ENCODE measurements at regions of chr1 and their contacts with region 1.

Region 1: DNA sequence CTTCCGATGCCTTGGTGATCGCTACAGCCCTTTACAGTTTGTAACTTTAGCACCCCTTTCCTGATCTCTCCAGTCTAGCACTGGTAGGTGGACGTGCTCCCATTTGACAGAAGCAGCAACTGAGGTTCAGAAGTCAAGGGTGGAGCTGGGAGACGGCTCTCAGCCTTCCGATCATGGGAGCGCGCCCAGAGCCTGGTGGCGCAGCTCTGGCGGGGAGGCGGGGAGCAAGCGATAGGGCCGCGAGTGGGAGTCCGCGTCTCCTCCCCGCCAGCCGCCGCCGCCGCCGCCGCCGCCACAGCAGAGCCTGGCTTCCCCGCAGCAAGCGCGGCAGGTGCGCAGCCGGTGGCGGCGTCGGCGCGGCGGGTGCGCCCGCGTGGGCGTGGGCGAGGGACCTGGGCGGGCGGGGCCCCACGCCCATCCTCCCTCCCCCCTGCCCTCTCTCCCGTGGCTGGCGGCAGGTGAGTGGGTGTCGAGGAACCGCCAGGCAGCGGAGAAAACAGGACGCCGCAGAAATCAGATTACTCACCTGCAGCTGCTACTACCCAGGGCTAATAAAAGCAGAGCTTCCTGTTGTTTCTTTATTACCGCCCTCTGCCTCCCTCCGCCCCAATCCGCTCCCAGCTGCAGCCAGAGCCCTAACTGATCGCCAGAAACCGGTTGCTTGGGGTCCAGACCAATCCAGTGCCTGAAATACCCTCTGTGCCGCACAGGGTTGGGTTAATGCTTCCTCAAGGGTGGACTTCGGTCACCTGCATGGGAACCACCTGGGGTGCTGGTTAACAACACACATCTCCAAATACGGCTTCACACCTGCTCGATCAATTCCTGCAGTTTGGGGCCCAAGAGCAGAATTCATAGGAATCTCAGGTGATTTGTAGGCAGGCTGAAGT is 60.2 kb upstream of the ID3 start:
- DNase-seq: peak; percentile 91
- ATAC-seq: peak; percentile 72
- H3K4me3 Mint-ChIP-seq: peak overlapping the region; percentile 68
- H3K27ac Mint-ChIP-seq: peak overlapping the region; percentile 82
- H3K4me1 Mint-ChIP-seq: peaks cover 81% of the 10 kb centered on the region
- H3K27me3 Mint-ChIP-seq: no peaks in the 10 kb centered on the region
- CTCF ChIP-seq: no peak

Region 2: GRCh38 chr1:23577056-23578004 is 42.2 kb before region 1 on chr1:
- CTCF ChIA-PET with region 1: interaction called, 3 read pairs
- POLR2A ChIA-PET with region 1: interaction called, 13 read pairs
- intact Hi-C with region 1: loop called (anchors 5 kb)
- DNase-seq: peak; percentile 81
- ATAC-seq: peak; percentile 93
- H3K4me3 Mint-ChIP-seq: peak overlapping the region; percentile 40
- H3K27ac Mint-ChIP-seq: peak overlapping the region; percentile 85
- H3K4me1 Mint-ChIP-seq: peaks cover 59% of the 10 kb centered on the region
- H3K27me3 Mint-ChIP-seq: no peaks in the 10 kb centered on the region
- CTCF ChIP-seq: no peak

Region 3: DNA sequence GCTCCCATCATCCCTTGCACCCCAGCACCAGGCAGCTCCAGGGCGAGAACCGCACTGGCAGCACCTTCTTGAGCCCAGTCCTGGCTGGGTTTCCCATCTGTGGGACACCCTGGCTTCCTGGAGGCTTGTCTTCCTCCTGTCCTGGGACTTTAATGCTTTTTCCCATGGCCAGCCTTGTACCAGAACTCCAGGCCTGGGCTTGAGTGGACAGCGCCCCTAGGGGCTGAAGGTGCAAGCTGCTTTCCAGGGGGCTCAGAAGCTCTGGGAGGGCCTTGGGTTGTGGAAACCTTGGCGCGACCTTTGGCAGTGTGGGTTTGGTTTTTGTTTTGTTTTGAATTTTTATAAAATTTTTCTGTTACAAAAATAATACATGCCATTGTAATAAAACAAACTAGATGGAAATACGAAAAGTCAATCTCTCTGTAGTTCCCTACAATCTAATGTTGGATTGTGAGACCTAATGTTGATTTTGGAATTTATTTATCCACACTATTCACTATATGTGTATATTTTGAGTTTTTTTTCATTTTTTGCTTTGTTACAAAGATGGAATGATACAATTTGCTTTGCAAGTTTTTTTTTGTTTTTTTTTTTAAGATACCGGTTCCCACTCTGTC is 38.2 kb after region 1 on chr1:
- CTCF ChIA-PET with region 1: no interaction called
- POLR2A ChIA-PET with region 1: no interaction called
- intact Hi-C with region 1: no loop called
- DNase-seq: peak; percentile 74
- ATAC-seq: peak; percentile 92
- H3K4me3 Mint-ChIP-seq: no peak overlapping the region
- H3K27ac Mint-ChIP-seq: no peak overlapping the region
- H3K4me1 Mint-ChIP-seq: no peaks in the 10 kb centered on the region
- H3K27me3 Mint-ChIP-seq: no peaks in the 10 kb centered on the region
- CTCF ChIP-seq: peak; percentile 89

Region 4: GRCh38 chr1:23682946-23683345 is 63.4 kb after region 1 on chr1:
- CTCF ChIA-PET with region 1: no interaction called
- POLR2A ChIA-PET with region 1: no interaction called
- intact Hi-C with region 1: no loop called
- DNase-seq: no peak
- ATAC-seq: no peak
- H3K4me3 Mint-ChIP-seq: no peak overlapping the region
- H3K27ac Mint-ChIP-seq: no peak overlapping the region
- H3K4me1 Mint-ChIP-seq: no peaks in the 10 kb centered on the region
- H3K27me3 Mint-ChIP-seq: peaks cover 22% of the 10 kb centered on the region
- CTCF ChIP-seq: no peak